ENCODE measurements at regions of chr14 and their contacts with region 1.

Region 1: DNA sequence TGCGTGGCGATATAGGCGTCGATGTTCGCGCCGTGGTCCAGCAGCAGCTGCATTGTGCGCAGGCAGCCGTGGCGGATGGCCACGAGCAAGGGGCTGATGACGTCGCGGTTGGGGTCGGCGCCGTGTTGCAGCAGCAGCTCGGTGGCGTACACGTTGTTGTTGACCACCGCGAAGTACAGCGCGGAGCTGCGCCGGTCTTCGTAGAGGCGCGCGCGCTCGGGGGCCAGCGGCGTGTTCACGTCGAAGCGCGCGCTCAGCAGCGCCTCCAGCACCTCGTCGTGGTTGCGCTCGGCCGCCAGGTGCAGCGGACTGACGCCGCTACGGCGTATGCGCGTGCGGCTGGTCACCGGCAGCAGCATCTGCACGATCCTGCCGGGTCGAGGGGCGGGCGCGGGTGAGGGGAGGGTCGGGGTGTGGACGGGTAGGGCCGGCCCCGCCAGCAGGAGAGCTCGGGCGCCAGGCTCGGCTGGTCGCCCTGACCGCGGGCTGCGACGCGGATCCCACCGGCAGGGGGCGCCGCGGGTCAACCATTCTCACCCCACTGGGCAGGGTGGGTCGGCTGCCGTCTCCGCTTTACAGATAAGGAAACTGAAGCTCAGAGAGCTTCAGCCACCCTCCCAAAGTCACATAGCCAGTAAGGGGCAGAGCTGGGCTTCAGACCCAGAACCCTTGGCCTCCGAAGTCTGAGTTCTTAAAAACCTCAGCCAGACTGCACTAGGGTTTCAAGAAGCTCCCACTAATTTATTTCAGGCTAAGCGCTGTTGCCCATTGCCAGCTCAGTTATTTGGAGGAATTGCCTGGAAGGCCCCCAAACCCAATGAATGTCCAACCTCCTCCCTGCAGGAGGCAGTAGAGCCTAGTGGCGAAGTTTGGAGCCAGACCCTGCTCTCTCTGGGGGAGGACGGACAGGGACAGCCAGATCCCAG is 12.4 kb downstream of the FAM181A start:
- DNase-seq: peak; percentile 92
- H3K4me3 Mint-ChIP-seq: peak overlapping the region; percentile 57
- H3K27ac Mint-ChIP-seq: no peak overlapping the region
- H3K4me1 Mint-ChIP-seq: peaks cover 7% of the 10 kb centered on the region
- H3K27me3 Mint-ChIP-seq: peaks cover 19% of the 10 kb centered on the region

Region 2: GRCh38 chr14:93953263-93953662 is 13.7 kb after region 1 on chr14:
- CTCF ChIA-PET with region 1: interaction called, 75 read pairs
- intact Hi-C with region 1: no loop called
- DNase-seq: no peak
- H3K4me3 Mint-ChIP-seq: no peak overlapping the region
- H3K27ac Mint-ChIP-seq: no peak overlapping the region
- H3K4me1 Mint-ChIP-seq: peaks cover 68% of the 10 kb centered on the region
- H3K27me3 Mint-ChIP-seq: no peaks in the 10 kb centered on the region

Region 3: DNA sequence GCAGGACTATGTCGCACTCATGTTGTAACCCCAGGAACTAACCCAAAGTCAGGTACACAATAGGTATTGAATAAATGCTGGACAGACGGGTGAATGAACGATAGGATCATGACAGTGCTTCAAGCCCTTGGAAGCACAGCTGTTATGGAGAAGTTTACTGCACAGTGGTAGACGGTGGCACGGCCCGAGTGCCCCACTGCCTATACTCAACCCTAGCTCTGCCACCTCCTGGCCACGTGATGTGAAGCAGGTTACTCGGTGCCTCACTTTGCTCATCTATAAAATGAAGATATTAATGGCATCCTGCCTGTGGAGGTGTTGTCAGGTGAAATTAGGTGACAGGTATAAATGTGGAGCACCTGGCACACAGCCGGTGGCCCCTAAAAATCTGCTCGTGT is 31.0 kb after region 1 on chr14:
- CTCF ChIA-PET with region 1: interaction called, 316 read pairs
- intact Hi-C with region 1: loop called (anchors 1 kb)
- DNase-seq: peak; percentile 84
- H3K4me3 Mint-ChIP-seq: peak overlapping the region; percentile 71
- H3K27ac Mint-ChIP-seq: peak overlapping the region; percentile 85
- H3K4me1 Mint-ChIP-seq: peaks cover 47% of the 10 kb centered on the region
- H3K27me3 Mint-ChIP-seq: peaks cover 2% of the 10 kb centered on the region

Region 4: GRCh38 chr14:93984987-93985410 is 45.4 kb after region 1 on chr14:
- CTCF ChIA-PET with region 1: interaction called, 28 read pairs
- intact Hi-C with region 1: no loop called
- DNase-seq: no peak
- H3K4me3 Mint-ChIP-seq: no peak overlapping the region
- H3K27ac Mint-ChIP-seq: no peak overlapping the region
- H3K4me1 Mint-ChIP-seq: peaks cover 10% of the 10 kb centered on the region
- H3K27me3 Mint-ChIP-seq: no peaks in the 10 kb centered on the region

Region 5: GRCh38 chr14:94009767-94010166 is 70.2 kb after region 1 on chr14:
- CTCF ChIA-PET with region 1: interaction called, 384 read pairs
- intact Hi-C with region 1: no loop called
- DNase-seq: no peak
- H3K4me3 Mint-ChIP-seq: no peak overlapping the region
- H3K27ac Mint-ChIP-seq: peak overlapping the region; percentile 10
- H3K4me1 Mint-ChIP-seq: peaks cover 31% of the 10 kb centered on the region
- H3K27me3 Mint-ChIP-seq: peaks cover 2% of the 10 kb centered on the region

Region 6: GRCh38 chr14:94129111-94129757 is 189.7 kb after region 1 on chr14 and contains the start of gene IFI27L2:
- CTCF ChIA-PET with region 1: interaction called, 12 read pairs
- intact Hi-C with region 1: loop called (anchors 2 kb)
- DNase-seq: peak; percentile 88
- H3K4me3 Mint-ChIP-seq: peak within 1 kb of the TSS; percentile 88
- H3K27ac Mint-ChIP-seq: peak within 1 kb of the TSS; percentile 68
- H3K4me1 Mint-ChIP-seq: peaks cover 16% of the 10 kb centered on the region
- H3K27me3 Mint-ChIP-seq: no peaks in the 10 kb centered on the region
- total RNA-seq, gene IFI27L2: 67.0 to 73.4 TPM

Region 7: DNA sequence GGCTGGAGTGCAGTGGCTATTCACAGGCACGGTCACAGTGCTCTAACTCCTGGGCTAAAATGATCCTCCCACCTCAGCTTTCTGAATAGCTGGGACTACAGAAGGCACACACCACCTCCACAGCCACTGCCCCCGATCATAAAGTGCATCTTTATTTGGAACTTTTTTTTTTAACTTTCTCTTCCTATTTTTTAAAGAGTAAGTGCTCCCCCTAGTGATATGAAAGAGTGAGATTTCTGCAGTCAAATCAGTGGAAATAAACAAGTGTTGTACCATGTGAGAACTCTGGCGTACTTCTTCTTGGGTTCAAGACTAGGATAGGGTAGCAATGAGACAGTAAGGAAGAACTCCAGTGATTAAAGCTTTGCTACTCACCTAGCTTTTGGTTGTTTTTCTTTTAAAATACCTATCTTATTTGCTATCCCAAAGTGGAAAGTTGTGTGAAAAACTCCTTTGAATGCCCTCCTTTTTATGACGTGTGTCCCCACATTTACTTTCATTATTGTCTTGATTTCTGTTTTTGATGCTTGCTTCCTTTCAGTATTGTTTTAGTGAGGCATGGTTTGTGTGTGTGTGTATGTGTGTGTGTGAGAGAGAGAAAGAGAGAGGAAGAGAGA is 241.2 kb after region 1 on chr14:
- CTCF ChIA-PET with region 1: interaction called, 11 read pairs
- intact Hi-C with region 1: no loop called
- DNase-seq: no peak
- H3K4me3 Mint-ChIP-seq: peak overlapping the region; percentile 31
- H3K27ac Mint-ChIP-seq: peak overlapping the region; percentile 9
- H3K4me1 Mint-ChIP-seq: peaks cover 45% of the 10 kb centered on the region
- H3K27me3 Mint-ChIP-seq: no peaks in the 10 kb centered on the region